A673 (cell line): ENCODE measurements at regions of chr12 and their contacts with region 1.

Region 1: DNA sequence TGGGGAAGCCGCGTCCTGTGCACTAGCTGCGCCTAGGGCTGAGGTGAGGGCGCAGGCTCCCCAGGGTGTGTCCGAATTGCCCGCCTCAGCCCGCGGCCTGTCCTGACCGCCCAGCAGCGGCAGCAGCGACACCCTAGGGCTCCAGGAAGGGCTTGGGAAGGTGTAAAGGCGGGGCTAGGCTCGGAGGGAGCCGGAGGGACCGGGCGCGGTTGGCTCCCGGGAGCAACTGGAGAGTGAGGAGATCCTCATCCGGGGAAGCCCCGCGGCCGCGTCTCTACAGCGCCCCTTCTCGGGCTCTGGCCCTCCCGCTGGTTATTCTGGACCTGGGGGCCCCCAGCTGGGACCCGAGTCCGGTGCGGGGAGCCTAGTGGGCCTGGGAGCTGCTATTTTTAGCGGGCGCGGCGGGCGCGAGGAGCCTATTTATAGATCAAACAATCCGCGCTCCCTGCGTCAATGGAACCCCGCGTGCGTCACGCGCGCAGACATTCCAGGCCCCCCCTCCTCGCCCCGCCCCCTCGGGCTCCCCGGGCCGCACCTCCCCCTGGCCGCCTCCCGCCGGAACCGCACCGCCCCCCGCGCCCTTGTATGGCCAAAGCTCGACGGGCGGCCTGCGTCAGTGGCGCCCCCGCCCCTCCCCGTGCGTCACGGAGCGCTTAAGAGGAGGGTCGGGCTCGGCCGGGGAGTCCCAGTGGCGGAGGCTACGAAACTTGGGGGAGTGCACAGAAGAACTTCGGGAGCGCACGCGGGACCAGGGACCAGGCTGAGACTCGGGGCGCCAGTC is at the start of gene NR4A1:
- DNase-seq: peak; percentile 95
- H3K4me3 ChIP-seq: peak within 1 kb of the TSS; percentile 60
- H3K27ac ChIP-seq: peak within 1 kb of the TSS; percentile 99
- H3K4me1 ChIP-seq: peaks cover 12% of the 10 kb centered on the region
- H3K27me3 ChIP-seq: no peaks in the 10 kb centered on the region
- CTCF ChIP-seq: no peak
- total RNA-seq, gene NR4A1: 12.5 and 19.8 TPM in 2 replicates

Region 2: DNA sequence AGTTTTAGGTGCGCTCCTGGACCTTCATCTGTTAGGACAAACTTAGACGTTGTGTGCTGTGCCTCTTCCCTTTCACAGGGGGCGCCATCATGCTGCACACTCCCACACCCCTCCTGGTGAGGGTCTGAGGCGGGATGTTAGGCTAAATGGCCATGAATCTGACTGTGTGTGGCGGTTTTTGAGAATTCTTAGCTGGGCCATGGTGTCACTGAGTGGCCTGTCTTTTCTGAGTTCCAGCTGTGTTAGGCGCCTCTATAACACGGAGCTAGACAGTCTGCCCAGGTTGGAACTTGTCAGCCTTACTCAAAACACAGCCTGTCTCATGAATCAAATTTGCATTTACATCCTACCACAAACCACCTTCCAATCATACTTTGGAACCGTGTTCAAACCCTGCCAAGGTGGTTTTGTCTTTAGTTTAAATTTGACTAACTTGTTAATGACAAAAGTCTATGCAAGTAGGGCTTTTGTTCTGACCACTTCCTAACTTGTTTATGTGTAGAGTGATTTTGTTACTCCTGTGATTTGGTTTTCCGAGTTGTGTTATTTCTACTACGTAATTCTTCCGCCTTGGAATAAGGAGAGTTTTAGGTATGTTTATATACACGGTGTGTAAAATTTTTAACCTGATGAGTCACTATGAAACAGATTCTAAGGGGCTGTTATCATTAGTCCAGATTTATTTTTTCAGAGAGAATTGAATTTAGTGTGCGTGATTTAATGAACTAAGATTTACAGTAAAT is 79.9 kb before region 1 on chr12:
- CTCF ChIA-PET with region 1: no interaction called
- POLR2A ChIA-PET with region 1: no interaction called
- intact Hi-C with region 1: no loop called
- DNase-seq: peak; percentile 61
- H3K4me3 ChIP-seq: no peak overlapping the region
- H3K27ac ChIP-seq: peak overlapping the region; percentile 73
- H3K4me1 ChIP-seq: peaks cover 51% of the 10 kb centered on the region
- H3K27me3 ChIP-seq: no peaks in the 10 kb centered on the region
- CTCF ChIP-seq: peak; percentile 82

Region 3: GRCh38 chr12:52032804-52033502 is 18.0 kb before region 1 on chr12:
- CTCF ChIA-PET with region 1: no interaction called
- POLR2A ChIA-PET with region 1: interaction called, 19 read pairs
- intact Hi-C with region 1: loop called (anchors 1 kb)
- DNase-seq: peak; percentile 97
- H3K4me3 ChIP-seq: peak overlapping the region; percentile 34
- H3K27ac ChIP-seq: peak overlapping the region; percentile 84
- H3K4me1 ChIP-seq: peaks cover 38% of the 10 kb centered on the region
- H3K27me3 ChIP-seq: no peaks in the 10 kb centered on the region
- CTCF ChIP-seq: no peak

Region 4: GRCh38 chr12:52069327-52070184 is 18.6 kb after region 1 on chr12 and contains the start of gene ATG101:
- CTCF ChIA-PET with region 1: interaction called, 3 read pairs
- POLR2A ChIA-PET with region 1: no interaction called
- intact Hi-C with region 1: loop called (anchors 1 kb)
- DNase-seq: peak; percentile 97
- H3K4me3 ChIP-seq: peak within 1 kb of the TSS; percentile 98
- H3K27ac ChIP-seq: peak within 1 kb of the TSS; percentile 100
- H3K4me1 ChIP-seq: peaks cover 9% of the 10 kb centered on the region
- H3K27me3 ChIP-seq: no peaks in the 10 kb centered on the region
- CTCF ChIP-seq: peak; percentile 92
- total RNA-seq, gene ATG101: 52.0 and 54.3 TPM in 2 replicates